ENCODE measurements at regions of chr1 and their contacts with region 1.

Region 1: GRCh38 chr1:28789412-28789811 is 22.6 kb upstream of the OPRD1 start:
- DNase-seq: no peak
- ATAC-seq: no peak

Region 2: GRCh38 chr1:27884006-27884954 is 905.1 kb before region 1 on chr1:
- intact Hi-C with region 1: no loop called
- DNase-seq: no peak
- ATAC-seq: peak; percentile 59

Region 3: GRCh38 chr1:28877132-28877781 is 87.8 kb after region 1 on chr1:
- intact Hi-C with region 1: loop called (anchors 5 kb)
- DNase-seq: peak; percentile 87
- ATAC-seq: peak; percentile 88

Measured in sciatic nerve (tissue), 2 donors.